ENCODE measurements at regions of chr2 and their contacts with region 1.

Region 1: GRCh38 chr2:142877216-142877756 is at the start of gene KYNU:
- DNase-seq: no peak
- ATAC-seq: peak; percentile 68
- H3K4me3 ChIP-seq: peak within 1 kb of the TSS; percentile 80
- H3K27ac ChIP-seq: peak within 1 kb of the TSS; percentile 83
- H3K4me1 ChIP-seq: peaks cover 22% of the 10 kb centered on the region
- H3K27me3 ChIP-seq: no peaks in the 10 kb centered on the region
- CTCF ChIP-seq: peak; percentile 9 to 30 (median 22); a peak in 2 of 6 replicates
- EP300 ChIP-seq: no peak
- POLR2A ChIP-seq: no peak
- RAD21 ChIP-seq: peak; percentile 32; the same call in 1 of the 2 replicates
- polyA plus RNA-seq, gene KYNU: 65.0 to 101 TPM

Region 2: DNA sequence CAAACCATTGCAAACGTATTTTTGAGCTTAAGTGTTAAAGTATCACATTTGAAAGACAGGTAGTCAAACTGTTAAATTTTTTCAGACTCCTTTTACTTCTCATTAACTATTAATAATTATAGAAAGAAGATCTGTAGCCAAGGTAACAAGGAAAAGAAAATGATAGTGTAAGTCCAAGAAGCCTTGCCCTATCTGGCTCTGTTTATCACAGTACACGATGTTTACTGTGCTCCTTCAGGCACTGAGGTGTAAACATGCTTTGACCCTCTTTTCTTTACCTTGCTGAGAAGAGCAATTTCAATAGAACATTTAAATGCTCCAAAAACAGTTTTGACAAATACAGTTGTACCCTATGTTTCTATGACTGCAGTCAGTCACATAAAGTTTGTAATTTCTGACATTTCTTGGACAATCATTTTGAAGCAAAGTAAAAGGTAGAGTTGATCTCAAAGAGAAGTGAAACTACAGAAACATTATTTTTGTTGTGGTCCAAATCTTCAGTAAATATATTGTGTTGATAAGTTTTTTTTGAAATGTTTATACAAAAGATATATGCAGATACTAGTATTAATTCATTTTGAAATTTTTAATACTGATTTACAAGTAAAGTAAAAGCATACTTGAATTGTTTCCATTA is 152.5 kb before region 1 on chr2:
- CTCF ChIA-PET with region 1: no interaction called
- POLR2A ChIA-PET with region 1: no interaction called
- RAD21 ChIA-PET with region 1: no interaction called
- SMC1A ChIA-PET with region 1: no interaction called
- in situ Hi-C with region 1: no loop called
- intact Hi-C with region 1: no loop called
- DNase-seq: no peak
- ATAC-seq: peak; percentile 73
- H3K4me3 ChIP-seq: no peak overlapping the region
- H3K27ac ChIP-seq: no peak overlapping the region
- H3K4me1 ChIP-seq: peaks cover 3% of the 10 kb centered on the region; the same call in 1 of the 2 replicates
- H3K27me3 ChIP-seq: no peaks in the 10 kb centered on the region
- CTCF ChIP-seq: no peak
- EP300 ChIP-seq: no peak
- POLR2A ChIP-seq: no peak
- RAD21 ChIP-seq: no peak

Region 3: DNA sequence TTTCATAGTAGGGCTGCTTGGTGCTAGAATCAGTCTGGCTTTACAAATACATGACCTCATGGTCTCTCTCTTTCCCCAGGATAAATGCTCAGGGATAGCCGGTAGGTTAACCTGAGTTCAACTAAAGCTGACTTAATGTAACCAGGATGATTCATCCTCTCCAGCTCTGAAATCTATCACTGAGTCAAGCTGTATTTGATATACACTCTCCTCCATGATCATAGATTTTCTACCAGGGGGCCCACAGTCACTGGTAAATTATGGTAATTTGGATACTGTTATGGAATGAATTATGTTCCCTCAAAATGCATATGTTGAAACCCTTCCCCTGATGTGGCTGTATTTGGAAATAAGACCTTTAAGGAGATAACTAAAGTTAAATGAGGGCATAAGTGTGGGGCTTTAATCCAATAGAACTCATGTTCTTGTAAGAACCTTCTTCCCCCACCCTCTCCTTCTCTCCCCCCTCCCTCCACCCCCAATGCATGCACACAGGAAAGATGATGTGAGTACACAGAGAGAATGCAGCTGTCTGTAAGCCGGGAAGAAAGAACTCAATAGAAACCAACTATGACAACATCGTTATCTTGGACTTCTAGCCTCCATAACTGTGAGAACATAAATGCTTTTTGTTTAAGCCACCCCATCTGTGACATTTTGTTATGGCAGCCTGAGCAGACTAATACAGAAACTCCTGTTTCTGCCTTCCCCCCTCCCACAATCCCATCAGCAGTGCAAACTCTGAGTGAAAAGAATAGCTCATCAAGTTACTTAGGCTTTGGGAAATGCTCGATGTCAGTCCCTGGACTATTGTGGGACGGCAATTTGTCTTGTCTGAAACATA is 134.7 kb before region 1 on chr2:
- CTCF ChIA-PET with region 1: no interaction called
- POLR2A ChIA-PET with region 1: no interaction called
- RAD21 ChIA-PET with region 1: interaction called, 4 read pairs
- SMC1A ChIA-PET with region 1: no interaction called
- in situ Hi-C with region 1: no loop called
- intact Hi-C with region 1: loop called (anchors 5 kb)
- DNase-seq: no peak
- ATAC-seq: peak; percentile 69
- H3K4me3 ChIP-seq: no peak overlapping the region
- H3K27ac ChIP-seq: no peak overlapping the region; the same call in 1 of the 2 replicates
- H3K4me1 ChIP-seq: peaks cover 5% of the 10 kb centered on the region; the same call in 1 of the 2 replicates
- H3K27me3 ChIP-seq: no peaks in the 10 kb centered on the region
- CTCF ChIP-seq: no peak
- EP300 ChIP-seq: no peak
- POLR2A ChIP-seq: no peak
- RAD21 ChIP-seq: no peak

Region 4: DNA sequence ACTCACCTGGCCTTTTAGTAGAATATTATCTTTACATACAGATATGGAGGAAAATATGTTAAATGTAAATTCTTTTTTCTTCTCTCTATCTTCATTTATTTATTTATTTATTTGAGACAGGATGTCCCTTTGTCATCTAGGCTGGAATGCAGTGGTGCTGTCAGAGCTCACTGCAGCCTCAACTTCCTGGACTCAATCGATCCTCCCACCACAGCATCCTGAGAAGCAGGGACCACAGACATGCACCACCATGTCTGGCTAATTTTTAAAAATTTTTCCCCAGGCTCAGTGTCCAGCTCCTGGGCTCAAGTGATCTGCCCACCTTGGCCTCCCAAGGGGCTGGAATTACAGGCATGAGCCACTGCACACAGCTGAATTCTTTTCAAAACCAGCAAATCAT is 20.5 kb after region 1 on chr2:
- CTCF ChIA-PET with region 1: interaction called, 17 read pairs
- POLR2A ChIA-PET with region 1: interaction called, 17 read pairs
- RAD21 ChIA-PET with region 1: interaction called, 23 read pairs
- SMC1A ChIA-PET with region 1: interaction called, 56 read pairs
- in situ Hi-C with region 1: no loop called
- intact Hi-C with region 1: no loop called
- DNase-seq: no peak
- ATAC-seq: no peak
- H3K4me3 ChIP-seq: no peak overlapping the region
- H3K27ac ChIP-seq: no peak overlapping the region
- H3K4me1 ChIP-seq: peaks cover 7% of the 10 kb centered on the region; the same call in 1 of the 2 replicates
- H3K27me3 ChIP-seq: no peaks in the 10 kb centered on the region
- CTCF ChIP-seq: no peak
- EP300 ChIP-seq: no peak
- POLR2A ChIP-seq: no peak
- RAD21 ChIP-seq: no peak

Region 5: GRCh38 chr2:142937347-142937746 is 60.1 kb after region 1 on chr2:
- CTCF ChIA-PET with region 1: interaction called, 8 read pairs
- POLR2A ChIA-PET with region 1: interaction called, 5 read pairs
- RAD21 ChIA-PET with region 1: interaction called, 11 read pairs
- SMC1A ChIA-PET with region 1: interaction called, 8 read pairs
- in situ Hi-C with region 1: no loop called
- intact Hi-C with region 1: no loop called
- DNase-seq: no peak
- ATAC-seq: peak; percentile 22; the same call in 2 of the 3 replicates
- H3K4me3 ChIP-seq: no peak overlapping the region
- H3K27ac ChIP-seq: no peak overlapping the region
- H3K4me1 ChIP-seq: no peaks in the 10 kb centered on the region
- H3K27me3 ChIP-seq: no peaks in the 10 kb centered on the region
- CTCF ChIP-seq: no peak
- EP300 ChIP-seq: no peak
- POLR2A ChIP-seq: no peak
- RAD21 ChIP-seq: no peak

Region 6: GRCh38 chr2:142961202-142961601 is 83.9 kb after region 1 on chr2:
- CTCF ChIA-PET with region 1: no interaction called
- POLR2A ChIA-PET with region 1: no interaction called
- RAD21 ChIA-PET with region 1: no interaction called
- SMC1A ChIA-PET with region 1: no interaction called
- in situ Hi-C with region 1: no loop called
- intact Hi-C with region 1: no loop called
- DNase-seq: no peak
- ATAC-seq: no peak
- H3K4me3 ChIP-seq: no peak overlapping the region
- H3K27ac ChIP-seq: no peak overlapping the region
- H3K4me1 ChIP-seq: no peaks in the 10 kb centered on the region
- H3K27me3 ChIP-seq: no peaks in the 10 kb centered on the region
- CTCF ChIP-seq: no peak
- EP300 ChIP-seq: no peak
- POLR2A ChIP-seq: no peak
- RAD21 ChIP-seq: no peak

Region 7: DNA sequence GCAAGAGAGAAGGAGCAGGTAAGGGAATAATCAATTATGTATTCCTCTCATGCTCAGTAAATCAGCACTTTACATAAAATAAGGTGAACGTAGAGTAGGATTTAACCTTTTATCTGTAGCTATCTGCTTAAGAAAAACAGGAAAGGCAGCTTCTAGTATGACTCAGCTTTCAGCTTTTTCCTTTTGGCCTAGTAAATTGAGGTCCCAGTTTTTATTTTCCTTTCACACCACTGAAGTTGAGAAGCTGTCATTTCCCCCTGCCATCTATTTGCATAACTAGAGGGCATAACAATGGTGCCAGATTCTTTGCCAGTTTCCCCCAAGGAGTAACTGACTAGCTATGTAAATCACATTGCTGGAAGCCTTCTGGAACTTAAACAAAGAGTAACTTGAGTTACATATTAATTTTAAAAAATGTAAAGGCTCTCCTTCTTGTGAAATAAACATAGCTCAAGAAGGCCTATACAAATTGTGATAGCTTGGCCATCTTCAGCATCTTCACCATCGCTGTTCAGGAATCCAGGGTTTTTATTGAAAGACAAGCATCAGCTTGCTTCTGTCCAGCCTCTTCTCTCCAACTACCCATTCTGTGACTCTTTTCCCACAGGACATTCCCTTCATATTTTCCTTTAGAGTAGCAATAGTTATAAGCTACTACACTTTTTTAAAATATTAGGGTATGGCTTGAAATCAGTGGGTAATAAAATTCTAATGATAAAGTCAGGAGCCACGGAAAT is 97.2 kb after region 1 on chr2:
- CTCF ChIA-PET with region 1: interaction called, 48 read pairs
- POLR2A ChIA-PET with region 1: interaction called, 5 read pairs
- RAD21 ChIA-PET with region 1: interaction called, 33 read pairs
- SMC1A ChIA-PET with region 1: interaction called, 64 read pairs
- in situ Hi-C with region 1: no loop called
- intact Hi-C with region 1: no loop called
- DNase-seq: no peak
- ATAC-seq: peak; percentile 61
- H3K4me3 ChIP-seq: no peak overlapping the region
- H3K27ac ChIP-seq: no peak overlapping the region
- H3K4me1 ChIP-seq: peaks cover 9% of the 10 kb centered on the region
- H3K27me3 ChIP-seq: no peaks in the 10 kb centered on the region
- CTCF ChIP-seq: no peak
- EP300 ChIP-seq: no peak
- POLR2A ChIP-seq: no peak
- RAD21 ChIP-seq: no peak

Region 8: DNA sequence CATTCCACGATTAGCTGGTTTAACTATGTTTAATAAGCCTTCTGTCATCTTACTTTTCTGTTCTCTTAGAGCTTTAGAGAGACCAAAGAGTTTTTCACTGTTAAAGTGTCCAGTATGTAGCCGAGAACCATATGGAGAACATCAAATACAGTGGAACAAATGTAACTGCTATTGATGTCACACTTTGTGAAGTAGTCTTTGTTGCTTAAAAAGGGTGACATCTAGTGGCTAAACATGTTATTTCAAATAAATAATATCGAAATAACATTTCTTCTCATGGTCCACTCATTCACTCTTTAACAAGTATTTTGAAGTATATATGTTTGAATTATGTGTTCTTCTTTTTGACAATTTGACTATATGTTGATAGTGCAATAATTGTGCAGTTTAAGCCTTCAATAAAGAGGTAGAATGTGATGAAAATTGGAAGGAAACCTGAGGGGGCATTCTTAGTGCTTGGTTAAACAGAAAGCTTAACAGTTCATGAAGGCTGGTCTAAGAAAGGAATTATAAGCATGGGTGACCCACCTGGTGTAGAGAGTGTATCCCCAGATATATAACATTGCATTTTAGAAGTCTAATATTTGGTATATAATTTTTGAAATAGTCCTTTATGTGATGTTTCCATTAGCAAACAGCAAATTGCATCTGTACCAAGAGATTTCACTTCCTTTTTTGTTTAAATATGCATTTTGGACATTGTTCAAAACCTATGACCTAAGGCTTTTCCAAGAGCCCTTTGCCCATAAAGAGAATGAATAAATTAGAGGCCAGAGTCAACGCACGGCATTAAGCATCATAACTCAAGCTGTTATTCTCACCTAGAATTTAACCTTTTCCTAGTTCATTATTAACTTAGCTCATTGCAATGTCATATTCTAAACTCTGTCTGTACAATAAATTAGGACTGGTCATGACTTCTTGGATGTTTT is 112.3 kb after region 1 on chr2:
- CTCF ChIA-PET with region 1: interaction called, 32 read pairs
- POLR2A ChIA-PET with region 1: no interaction called
- RAD21 ChIA-PET with region 1: interaction called, 7 read pairs
- SMC1A ChIA-PET with region 1: interaction called, 9 read pairs
- in situ Hi-C with region 1: no loop called
- intact Hi-C with region 1: no loop called
- DNase-seq: no peak
- ATAC-seq: peak; percentile 88
- H3K4me3 ChIP-seq: no peak overlapping the region
- H3K27ac ChIP-seq: no peak overlapping the region
- H3K4me1 ChIP-seq: peaks cover 5% of the 10 kb centered on the region; the same call in 1 of the 2 replicates
- H3K27me3 ChIP-seq: no peaks in the 10 kb centered on the region
- CTCF ChIP-seq: peak in 2 of 3 experiments; percentile 26 to 48; a peak in 3 of 6 replicates
- EP300 ChIP-seq: no peak
- POLR2A ChIP-seq: no peak
- RAD21 ChIP-seq: peak; percentile 72

Measured in GM12878 (cell line).